Calu3 (cell line): ENCODE measurements at regions of chr17 and their contacts with region 1.

Region 1: GRCh38 chr17:37160944-37161343 is 212.2 kb downstream of the AATF start:
- DNase-seq: peak; percentile 63
- H3K4me3 Mint-ChIP-seq: no peak overlapping the region
- H3K27ac Mint-ChIP-seq: peak overlapping the region; percentile 37
- H3K4me1 Mint-ChIP-seq: peaks cover 18% of the 10 kb centered on the region
- H3K27me3 Mint-ChIP-seq: no peaks in the 10 kb centered on the region
- CTCF ChIP-seq: no peak

Region 2: DNA sequence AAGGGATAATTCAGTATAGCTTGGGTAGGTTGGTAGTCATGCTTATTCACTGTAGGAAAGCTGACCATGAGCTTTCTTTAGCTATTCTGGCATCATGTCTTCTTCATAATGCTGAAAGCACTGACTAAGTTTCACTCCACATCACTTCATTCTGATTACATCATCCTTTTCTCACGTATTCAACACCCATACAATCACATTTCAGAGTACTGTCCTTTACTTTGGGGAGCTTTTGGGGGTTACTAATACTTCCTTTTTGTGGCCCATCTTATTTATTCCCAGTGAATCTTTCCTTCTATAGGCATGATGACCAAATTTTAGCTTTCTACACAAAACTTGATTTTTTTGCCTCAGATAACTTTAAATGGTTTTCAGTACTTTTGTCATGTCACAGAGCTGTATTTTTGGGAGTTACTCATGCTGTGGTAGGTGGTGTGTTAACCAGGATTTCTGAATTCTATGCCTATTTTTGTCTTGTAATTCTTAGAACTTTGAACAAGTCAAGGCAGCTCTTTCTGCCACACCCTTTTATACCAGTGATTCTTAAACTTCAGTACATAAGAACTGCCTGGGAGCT is 269.2 kb after region 1 on chr17:
- CTCF ChIA-PET with region 1: interaction called, 12 read pairs
- intact Hi-C with region 1: no loop called
- DNase-seq: no peak
- H3K4me3 Mint-ChIP-seq: no peak overlapping the region
- H3K27ac Mint-ChIP-seq: peak overlapping the region; percentile 3
- H3K4me1 Mint-ChIP-seq: no peaks in the 10 kb centered on the region
- H3K27me3 Mint-ChIP-seq: no peaks in the 10 kb centered on the region
- CTCF ChIP-seq: no peak

Region 3: DNA sequence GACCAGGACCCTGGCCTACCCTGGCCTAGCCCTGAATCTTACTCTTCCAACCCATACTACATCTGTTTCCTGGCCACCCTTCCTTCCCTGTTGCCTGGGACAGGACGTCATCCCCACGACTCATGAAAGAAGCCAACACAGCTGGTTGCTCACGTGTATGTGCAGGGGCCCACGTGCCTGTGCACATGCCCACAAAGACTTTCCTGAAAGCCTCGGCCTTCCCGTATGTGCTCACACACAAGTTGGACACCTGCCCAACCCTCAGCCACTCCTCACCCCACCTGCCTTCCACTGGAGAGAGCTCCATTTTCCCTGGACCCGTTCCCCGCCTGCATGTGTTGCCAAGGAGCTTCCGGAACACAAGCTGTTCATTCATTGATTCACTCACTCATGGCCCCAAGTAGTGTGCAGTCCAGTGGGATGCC is 1983.5 kb after region 1 on chr17:
- CTCF ChIA-PET with region 1: no interaction called
- intact Hi-C with region 1: loop called (anchors 10 kb)
- DNase-seq: peak; percentile 87
- H3K4me3 Mint-ChIP-seq: no peak overlapping the region
- H3K27ac Mint-ChIP-seq: no peak overlapping the region
- H3K4me1 Mint-ChIP-seq: peaks cover 11% of the 10 kb centered on the region
- H3K27me3 Mint-ChIP-seq: peaks cover 47% of the 10 kb centered on the region
- CTCF ChIP-seq: no peak